ENCODE measurements at regions of chr7 and their contacts with region 1.

Region 1: GRCh38 chr7:23055582-23056178 is 41.8 kb upstream of the HYCC1 start:
- DNase-seq: peak; percentile 68
- CTCF ChIP-seq: peak; percentile 86

Region 2: DNA sequence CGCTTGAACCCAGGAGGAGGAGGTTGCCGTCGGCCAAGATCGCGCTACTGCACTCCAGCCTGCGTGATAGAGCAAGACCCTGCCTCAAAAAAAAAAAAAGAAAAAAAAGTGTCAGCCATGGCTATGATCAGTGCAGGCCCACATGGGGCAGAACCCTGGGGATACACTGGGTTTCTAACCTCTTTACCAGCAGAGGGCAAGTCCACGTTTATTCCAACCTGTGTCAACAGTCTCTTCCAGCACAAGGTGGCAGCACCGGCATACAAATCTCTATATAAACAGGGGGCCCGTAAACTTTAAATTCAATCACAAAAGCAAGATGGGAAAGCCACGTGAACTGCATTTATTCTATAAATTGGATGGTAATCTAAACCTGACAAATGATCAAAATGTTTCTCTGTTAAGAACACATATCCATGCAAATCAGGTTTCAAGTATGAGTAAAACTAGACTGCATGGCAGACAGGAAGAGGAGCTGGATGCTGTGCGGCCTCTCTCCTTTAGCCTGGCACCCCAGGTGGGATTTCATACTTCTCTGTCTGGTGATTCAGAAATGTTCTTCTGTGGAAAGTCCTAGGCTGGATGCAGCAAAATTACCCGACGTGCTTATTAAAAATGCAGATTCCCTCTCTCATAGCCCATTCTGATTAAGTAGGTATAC is 495.7 kb before region 1 on chr7:
- CTCF ChIA-PET with region 1: interaction called, 82 read pairs
- POLR2A ChIA-PET with region 1: no interaction called
- DNase-seq: peak; percentile 72
- CTCF ChIP-seq: peak; percentile 80

Region 3: DNA sequence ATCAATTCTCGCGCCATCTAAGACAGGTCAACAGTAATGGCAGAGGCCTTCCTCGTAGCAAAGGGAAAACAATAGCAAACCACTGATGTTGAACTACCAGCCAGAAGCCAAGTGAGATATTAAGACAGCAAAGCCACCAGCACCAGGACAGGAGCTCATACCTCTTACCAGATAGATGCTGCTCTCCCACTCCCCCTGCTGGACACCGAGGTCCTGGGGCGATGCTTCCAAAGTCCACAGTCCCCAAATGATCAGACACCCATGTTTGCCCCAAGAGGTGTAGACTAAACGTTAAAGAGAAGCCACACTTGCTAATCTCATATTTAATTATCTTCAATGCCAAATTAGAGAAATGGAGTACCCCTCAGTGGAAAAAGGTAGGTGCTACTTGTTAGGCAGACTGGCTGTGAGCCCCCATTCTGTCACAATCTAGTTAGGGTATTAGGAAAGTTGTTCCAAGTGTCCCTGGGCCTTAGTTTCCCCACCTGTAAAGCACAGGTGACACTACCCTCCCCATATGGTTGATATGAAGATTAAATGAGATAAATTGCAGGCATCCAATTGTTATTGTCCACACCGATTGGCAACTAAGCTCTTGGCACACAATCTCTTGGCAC is 273.0 kb before region 1 on chr7:
- CTCF ChIA-PET with region 1: interaction called, 44 read pairs
- POLR2A ChIA-PET with region 1: no interaction called
- DNase-seq: peak; percentile 84
- CTCF ChIP-seq: peak; percentile 87

Region 4: GRCh38 chr7:22822486-22823141 is 233.1 kb before region 1 on chr7 and contains the start of gene TOMM7:
- CTCF ChIA-PET with region 1: interaction called, 39 read pairs
- POLR2A ChIA-PET with region 1: no interaction called
- DNase-seq: peak; percentile 96
- CTCF ChIP-seq: peak; percentile 50

Region 5: DNA sequence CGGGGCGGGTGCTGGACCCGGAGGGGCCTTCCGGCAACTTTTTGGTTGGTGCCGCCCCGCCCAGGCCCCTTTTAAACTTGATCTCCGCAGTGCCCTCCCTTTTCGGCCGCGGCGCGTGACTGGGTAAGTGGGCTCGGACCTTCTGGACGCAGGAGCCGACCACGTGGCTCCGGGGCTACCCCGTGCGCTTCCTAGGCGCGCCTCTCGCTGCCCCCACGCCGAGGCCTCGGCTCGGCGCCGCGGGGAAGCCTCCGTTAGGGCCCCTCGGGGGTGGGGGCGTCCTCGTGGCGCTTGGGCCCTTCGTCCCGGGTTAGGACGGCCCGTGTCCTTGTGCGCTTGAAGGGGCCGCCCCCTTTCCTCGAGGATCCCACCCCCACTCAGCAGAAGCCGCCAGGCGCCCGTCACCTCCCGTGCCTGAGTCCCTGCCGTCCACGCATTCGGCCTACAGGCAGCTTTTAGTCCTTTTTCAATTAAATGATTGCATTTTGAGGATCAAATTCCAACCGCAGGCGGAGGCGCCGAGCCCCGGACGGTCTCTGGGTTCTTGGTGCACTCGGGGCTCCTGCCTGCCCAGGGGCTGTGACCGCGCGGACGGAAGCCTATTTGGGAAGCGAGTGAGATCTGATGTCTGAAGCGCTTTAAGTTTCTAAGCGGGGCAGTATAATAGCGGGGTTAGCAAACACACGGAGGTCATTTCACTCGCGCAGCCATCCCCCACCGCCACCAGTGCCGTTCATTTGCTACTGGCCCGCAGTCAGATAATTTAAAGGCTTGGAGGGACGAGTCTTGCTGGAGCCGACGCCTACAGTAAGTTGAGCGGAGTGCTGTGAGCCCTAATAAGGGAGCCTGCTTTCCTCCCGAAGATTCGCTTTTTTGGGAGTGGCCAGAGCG is 201.3 kb before region 1 on chr7:
- CTCF ChIA-PET with region 1: interaction called, 40 read pairs
- POLR2A ChIA-PET with region 1: interaction called, 7 read pairs
- DNase-seq: peak; percentile 96
- CTCF ChIP-seq: no peak

Region 6: GRCh38 chr7:23043441-23043840 is 12.2 kb before region 1 on chr7:
- CTCF ChIA-PET with region 1: interaction called, 26 read pairs
- POLR2A ChIA-PET with region 1: no interaction called
- DNase-seq: no peak
- CTCF ChIP-seq: no peak

Region 7: DNA sequence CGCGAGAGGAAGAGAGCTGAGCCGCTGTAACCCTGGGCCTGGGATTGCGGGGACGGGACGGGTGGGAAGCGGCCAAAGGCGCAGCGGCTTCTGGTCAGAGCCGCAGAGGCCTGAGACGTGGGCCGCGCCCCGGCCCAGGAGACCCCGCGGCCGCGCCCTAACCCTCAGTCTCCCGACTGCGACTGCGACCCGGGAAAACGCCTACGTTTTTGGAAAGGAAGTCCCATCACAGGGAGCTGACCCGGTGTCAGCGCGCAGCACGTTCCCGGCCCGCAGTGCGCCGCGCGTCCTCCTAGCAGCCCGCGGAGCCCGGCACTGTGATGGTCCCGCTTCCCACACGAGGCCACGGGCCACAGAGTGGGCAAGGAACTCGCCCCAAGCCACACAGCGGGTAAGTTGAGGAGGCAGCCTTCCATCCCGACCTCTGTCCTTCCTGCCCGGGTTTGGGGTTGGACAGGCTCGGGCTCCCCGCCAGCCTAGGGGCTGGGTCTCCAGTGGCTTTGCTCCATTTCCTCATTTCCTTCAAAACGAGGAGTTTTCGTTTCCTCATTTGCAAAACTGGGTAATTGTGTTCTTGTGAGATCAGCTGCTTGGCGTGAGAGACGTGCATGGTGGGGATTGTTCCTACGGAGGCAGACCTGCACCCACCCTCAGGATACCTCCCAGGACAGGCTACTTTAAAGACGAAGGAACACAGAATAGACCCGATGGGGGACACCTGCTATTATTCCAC is 192.1 kb after region 1 on chr7:
- CTCF ChIA-PET with region 1: no interaction called
- POLR2A ChIA-PET with region 1: no interaction called
- DNase-seq: peak; percentile 55
- CTCF ChIP-seq: no peak

Measured in GM10248 (cell line).